ENCODE measurements at regions of chr12 and their contacts with region 1.

Region 1: DNA sequence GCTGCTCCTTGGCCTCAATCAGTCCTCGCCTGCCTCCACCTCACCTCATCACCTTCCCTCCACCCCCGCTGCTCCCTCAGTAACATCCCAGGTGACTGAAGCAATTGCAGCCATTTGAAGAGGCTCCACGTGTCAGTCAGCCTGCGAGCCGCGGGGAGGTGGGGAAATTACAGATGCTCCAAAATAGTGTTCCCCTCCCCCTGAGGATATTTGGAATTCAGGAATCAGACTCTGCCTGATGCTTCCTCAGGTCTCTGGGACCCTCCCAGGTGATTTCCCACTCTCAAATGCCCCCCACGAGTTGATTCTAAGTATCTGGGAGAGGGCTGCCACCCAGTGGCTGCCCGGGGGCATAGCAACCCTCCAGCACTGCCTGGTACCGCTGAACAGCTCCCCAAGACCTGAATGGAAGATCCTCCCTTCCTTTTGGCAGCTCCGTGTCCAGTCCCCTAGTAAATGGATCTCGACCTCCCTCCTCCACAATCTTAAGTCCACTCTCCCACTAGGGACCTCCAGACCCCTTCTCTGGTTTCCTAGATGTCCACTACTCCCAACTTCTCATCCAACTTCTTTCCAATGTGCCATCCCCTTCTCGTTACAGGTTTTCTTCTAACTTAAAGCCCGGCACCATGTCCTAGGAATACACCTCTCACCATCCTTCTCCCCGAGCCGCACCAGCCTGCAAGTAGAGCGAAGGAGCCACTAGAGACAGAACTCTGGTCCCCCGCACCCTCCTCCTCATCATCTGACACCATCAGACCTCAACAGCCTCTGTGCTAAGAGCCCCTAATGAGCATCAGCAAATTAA is 1.4 kb upstream of the ASIC1 start:
- DNase-seq: peak; percentile 52
- H3K4me3 ChIP-seq: peak overlapping the region in 1 of 3 experiments; percentile 16
- H3K27ac ChIP-seq: no peak overlapping the region
- H3K4me1 ChIP-seq: peaks cover 11% of the 10 kb centered on the region
- H3K27me3 ChIP-seq: peaks cover 3% of the 10 kb centered on the region
- CTCF ChIP-seq: peak; percentile 91 to 98

Region 2: GRCh38 chr12:49776413-49776812 is 279.6 kb before region 1 on chr12:
- CTCF ChIA-PET with region 1: no interaction called
- dilution Hi-C with region 1: no loop called
- in situ Hi-C with region 1: loop called in 1 of 2 experiments (anchors 25 kb)
- intact Hi-C with region 1: loop called (anchors 1 kb)
- DNase-seq: peak; percentile 64
- H3K4me3 ChIP-seq: no peak overlapping the region
- H3K27ac ChIP-seq: no peak overlapping the region
- H3K4me1 ChIP-seq: peaks cover 15% of the 10 kb centered on the region
- H3K27me3 ChIP-seq: no peaks in the 10 kb centered on the region
- CTCF ChIP-seq: peak; percentile 84 to 85

Region 3: GRCh38 chr12:50016501-50017475 is 39.2 kb before region 1 on chr12:
- CTCF ChIA-PET with region 1: no interaction called
- dilution Hi-C with region 1: no loop called
- in situ Hi-C with region 1: no loop called
- intact Hi-C with region 1: no loop called
- DNase-seq: peak; percentile 16
- H3K4me3 ChIP-seq: no peak overlapping the region
- H3K27ac ChIP-seq: no peak overlapping the region
- H3K4me1 ChIP-seq: peaks cover 4% of the 10 kb centered on the region
- H3K27me3 ChIP-seq: no peaks in the 10 kb centered on the region
- CTCF ChIP-seq: no peak

Region 4: DNA sequence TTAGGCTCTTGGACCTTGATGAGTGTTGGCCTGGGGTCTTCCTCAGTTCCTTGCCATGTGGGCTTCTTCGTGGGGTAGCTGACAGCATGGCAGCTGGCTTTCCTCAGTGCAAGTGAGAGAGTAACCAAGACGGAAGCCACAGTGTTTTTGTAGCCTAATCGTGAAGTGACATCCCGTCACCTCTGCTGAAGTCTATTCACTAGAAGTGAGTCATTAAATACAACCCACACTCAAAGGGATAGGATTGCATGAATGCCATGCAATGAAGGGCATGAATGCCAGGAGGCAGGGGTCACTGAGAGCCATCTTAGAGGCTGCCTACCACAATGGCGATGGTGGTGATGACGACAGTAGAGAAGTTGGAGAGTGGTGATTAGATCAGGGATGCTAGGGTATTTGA is 12.2 kb before region 1 on chr12:
- CTCF ChIA-PET with region 1: interaction called, 4 read pairs
- dilution Hi-C with region 1: no loop called
- in situ Hi-C with region 1: no loop called
- intact Hi-C with region 1: loop called (anchors 1 kb)
- DNase-seq: no peak
- H3K4me3 ChIP-seq: no peak overlapping the region
- H3K27ac ChIP-seq: no peak overlapping the region
- H3K4me1 ChIP-seq: no peaks in the 10 kb centered on the region
- H3K27me3 ChIP-seq: no peaks in the 10 kb centered on the region
- CTCF ChIP-seq: no peak